Activated CD8-positive, alpha-beta T cell treated with anti-CD3 and anti-CD28 coated beads, Interleukin-2, amount 10 ng/mL, durations not matched to agents 7 days and 5 days (primary cell): ENCODE measurements at regions of chr1 and their contacts with region 1.

Region 1: DNA sequence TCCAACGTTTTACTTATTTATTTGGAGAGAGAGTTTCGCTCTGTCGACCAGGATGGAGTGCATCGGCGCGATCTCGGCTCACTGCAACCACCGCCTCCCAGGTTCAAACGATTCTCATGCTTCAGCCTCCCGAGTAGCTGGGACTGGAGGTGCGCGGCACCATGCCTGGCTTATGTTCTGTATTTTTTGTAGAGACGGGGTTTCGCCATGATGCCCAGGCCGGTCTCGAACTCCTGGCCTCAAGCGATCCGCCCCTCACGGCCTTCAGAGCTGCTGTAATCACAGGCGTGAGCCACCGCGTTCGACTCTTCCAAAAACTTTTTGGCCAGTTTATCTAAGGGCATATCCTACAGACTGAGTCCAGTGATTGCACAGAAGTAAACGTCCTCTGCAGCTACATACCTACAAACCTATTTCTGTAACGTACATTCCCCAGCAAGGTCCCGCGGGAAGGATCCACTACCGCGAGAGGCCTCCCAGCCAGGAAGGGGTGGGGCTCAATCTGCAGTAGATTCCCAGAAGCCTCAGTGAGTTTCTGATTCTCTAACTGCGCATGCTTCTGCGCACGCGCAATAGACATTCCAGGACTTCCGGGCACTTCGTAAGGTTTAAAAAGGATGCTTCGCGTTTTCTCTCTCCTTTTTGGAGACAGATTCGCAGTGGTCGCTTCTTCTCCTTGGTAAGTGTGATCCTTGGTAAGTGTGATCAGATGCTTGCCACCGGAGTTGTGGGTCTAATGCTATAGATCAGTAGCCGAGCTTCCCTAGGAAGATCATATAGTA is at the start of gene RCC1:
- DNase-seq: peak; percentile 98
- ATAC-seq: peak; percentile 88
- H3K4me3 Mint-ChIP-seq: peak within 1 kb of the TSS; percentile 97
- H3K27ac Mint-ChIP-seq: peak within 1 kb of the TSS; percentile 97
- H3K4me1 Mint-ChIP-seq: peaks cover 28% of the 10 kb centered on the region
- H3K27me3 Mint-ChIP-seq: no peaks in the 10 kb centered on the region
- total RNA-seq, gene RCC1: 80.7 to 85.3 TPM

Region 2: DNA sequence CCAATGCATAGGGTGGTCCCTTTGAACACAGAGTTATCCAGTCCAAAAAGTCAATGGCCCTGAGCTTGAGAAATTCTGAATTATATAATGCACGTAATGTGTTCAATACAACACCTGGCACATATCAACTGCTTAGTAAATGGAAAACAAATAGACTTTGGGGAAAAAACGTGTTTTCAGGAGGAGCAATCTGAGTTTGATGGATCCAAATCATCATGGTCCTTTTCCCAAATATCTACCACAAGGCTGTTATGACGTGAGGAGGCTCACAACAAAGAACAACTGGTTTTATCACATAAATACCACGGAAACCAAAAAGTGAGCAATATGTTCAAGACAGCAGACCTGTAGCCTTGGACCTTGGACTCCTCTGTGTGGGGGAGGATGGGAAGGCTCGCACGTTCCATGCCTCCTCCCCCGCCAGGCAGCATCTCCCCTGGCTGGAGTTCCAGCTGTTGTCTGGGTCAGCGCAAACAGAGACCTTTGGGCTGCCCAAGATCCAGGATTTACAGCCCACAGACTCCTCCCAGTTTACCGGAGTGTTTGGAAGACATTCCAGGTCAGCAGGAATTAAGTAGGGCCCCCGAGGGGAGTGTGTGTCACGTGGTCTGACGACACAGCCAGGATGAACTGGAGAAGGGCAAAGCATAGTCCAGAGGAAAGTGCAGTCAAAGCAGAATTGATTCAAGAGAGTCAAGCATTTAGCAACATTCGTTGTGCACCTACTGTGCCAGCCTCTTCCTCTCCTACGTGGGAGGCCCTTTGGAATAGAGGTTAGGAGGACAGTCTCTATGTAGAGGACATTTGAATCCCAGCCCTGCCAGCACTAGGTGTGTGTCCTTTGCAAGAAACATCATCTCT is 209.0 kb before region 1 on chr1:
- CTCF ChIA-PET with region 1: no interaction called
- POLR2A ChIA-PET with region 1: no interaction called
- DNase-seq: no peak
- ATAC-seq: no peak
- H3K4me3 Mint-ChIP-seq: no peak overlapping the region
- H3K27ac Mint-ChIP-seq: no peak overlapping the region
- H3K4me1 Mint-ChIP-seq: peaks cover 24% of the 10 kb centered on the region
- H3K27me3 Mint-ChIP-seq: peaks cover 13% of the 10 kb centered on the region

Region 3: GRCh38 chr1:28443550-28443949 is 62.0 kb before region 1 on chr1:
- CTCF ChIA-PET with region 1: no interaction called
- POLR2A ChIA-PET with region 1: no interaction called
- DNase-seq: no peak
- ATAC-seq: no peak
- H3K4me3 Mint-ChIP-seq: no peak overlapping the region
- H3K27ac Mint-ChIP-seq: no peak overlapping the region
- H3K4me1 Mint-ChIP-seq: peaks cover 19% of the 10 kb centered on the region
- H3K27me3 Mint-ChIP-seq: no peaks in the 10 kb centered on the region

Region 4: DNA sequence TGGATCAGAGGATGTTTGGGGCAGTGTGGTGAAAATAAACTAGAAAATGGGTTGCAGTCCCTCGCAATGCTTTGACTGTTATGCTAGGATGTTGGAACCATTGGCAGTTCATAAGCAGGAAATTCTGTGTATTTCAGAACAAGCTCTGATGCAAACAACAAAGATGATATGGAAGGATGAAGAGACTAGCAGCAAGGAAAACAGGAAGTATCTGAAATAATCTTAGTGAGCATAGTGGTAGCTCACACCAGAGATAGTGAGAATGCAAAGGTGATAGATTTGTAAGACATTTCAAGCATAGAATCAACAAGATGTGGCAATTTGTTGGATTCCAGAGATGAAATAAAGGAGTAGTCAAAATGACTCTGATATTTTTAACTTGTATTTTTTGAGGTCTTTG is 10.9 kb before region 1 on chr1:
- CTCF ChIA-PET with region 1: no interaction called
- POLR2A ChIA-PET with region 1: interaction called, 10 read pairs
- DNase-seq: no peak
- ATAC-seq: no peak
- H3K4me3 Mint-ChIP-seq: no peak overlapping the region
- H3K27ac Mint-ChIP-seq: peak overlapping the region; percentile 69
- H3K4me1 Mint-ChIP-seq: peaks cover 6% of the 10 kb centered on the region
- H3K27me3 Mint-ChIP-seq: no peaks in the 10 kb centered on the region

Region 5: DNA sequence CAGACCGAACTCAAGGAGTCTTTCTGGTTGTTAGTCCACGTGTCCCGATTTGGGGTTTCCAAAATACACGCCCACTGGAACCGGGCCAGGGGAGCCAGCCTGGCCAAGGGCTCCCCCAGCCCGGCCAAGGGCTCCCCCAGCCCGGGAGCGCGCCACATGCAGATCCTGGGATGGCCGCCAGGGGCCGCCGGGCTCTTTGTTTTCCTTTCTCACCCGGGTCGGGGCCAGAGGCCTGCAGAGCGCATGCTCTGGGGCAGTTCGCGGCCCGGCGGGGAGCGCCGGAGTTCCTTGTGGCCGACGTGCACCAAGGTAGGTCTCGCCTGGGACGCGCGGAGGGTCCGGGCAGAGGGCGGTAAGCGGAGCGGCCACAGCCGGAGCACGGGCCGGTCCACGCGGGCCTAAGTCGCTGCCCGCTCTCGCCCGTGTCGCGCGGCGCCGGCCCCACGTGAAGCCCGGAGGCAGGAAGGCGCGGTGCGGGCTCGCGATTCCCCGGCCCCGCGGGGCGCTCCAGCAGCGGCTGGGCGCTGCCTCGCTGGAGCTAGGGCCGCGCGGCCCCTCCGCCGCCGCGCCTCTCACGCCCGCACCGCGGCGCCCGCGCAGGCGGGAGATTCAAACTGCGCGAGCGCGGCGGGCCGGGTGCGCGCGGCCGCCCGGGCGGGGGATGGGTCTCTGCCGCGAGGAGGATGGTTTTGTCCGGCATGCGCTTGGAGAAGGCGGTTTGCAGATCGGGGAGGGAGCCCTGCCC is 12.6 kb after region 1 on chr1:
- CTCF ChIA-PET with region 1: interaction called, 27 read pairs
- POLR2A ChIA-PET with region 1: interaction called, 7 read pairs
- DNase-seq: peak; percentile 91
- ATAC-seq: peak; percentile 77
- H3K4me3 Mint-ChIP-seq: peak overlapping the region; percentile 92
- H3K27ac Mint-ChIP-seq: peak overlapping the region; percentile 94
- H3K4me1 Mint-ChIP-seq: peaks cover 41% of the 10 kb centered on the region
- H3K27me3 Mint-ChIP-seq: no peaks in the 10 kb centered on the region

Region 6: DNA sequence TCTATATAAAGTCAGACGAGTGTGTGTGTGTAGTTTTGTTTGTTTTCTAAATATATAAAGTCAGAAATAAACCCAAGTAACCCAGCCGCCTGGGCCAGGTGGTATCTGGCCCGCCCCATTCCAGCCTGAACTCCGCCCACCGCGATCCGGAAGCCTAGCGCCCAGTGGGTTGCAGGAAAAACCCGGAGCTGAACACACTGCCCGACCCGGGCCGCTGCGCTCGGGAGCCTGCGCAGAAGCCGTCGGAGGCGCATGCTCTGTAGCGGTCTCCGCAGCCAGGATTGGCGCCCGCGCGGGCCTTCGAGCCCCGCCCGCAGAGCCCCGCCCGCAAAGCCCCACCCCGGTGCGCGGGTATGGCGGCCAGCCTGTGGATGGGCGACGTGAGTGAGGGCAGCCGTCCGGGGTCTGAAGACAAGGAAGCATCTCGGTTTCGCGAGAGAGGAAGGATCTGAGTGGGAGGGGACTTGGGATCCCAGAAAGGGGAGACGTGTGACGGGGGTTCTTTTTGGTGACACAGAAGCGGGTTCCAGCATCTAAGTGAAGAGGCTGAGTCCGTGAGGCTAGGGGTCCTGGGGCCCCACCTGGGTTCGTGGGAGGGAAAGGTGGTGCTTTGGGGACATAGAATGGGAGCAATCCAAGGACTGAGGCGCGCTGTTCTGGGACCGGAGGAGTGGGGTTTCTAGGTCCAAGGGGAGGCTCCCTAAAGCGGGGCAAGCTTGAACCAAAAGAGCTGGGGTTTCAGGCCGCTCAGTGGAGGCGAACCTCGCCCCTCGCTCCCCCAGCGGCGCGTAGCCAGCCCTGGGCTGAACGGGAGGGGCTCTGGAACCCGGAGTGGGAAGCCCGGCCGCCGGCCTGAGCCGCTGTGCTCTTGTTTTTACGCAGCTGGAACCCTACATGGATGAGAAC is 47.4 kb after region 1 on chr1 and contains the start of gene TRNAU1AP:
- CTCF ChIA-PET with region 1: interaction called, 4 read pairs
- POLR2A ChIA-PET with region 1: interaction called, 12 read pairs
- DNase-seq: peak; percentile 98
- ATAC-seq: peak; percentile 95
- H3K4me3 Mint-ChIP-seq: peak within 1 kb of the TSS; percentile 98
- H3K27ac Mint-ChIP-seq: peak within 1 kb of the TSS; percentile 97
- H3K4me1 Mint-ChIP-seq: peaks cover 14% of the 10 kb centered on the region
- H3K27me3 Mint-ChIP-seq: no peaks in the 10 kb centered on the region
- total RNA-seq, gene TRNAU1AP: 73.2 to 77.7 TPM

Region 7: DNA sequence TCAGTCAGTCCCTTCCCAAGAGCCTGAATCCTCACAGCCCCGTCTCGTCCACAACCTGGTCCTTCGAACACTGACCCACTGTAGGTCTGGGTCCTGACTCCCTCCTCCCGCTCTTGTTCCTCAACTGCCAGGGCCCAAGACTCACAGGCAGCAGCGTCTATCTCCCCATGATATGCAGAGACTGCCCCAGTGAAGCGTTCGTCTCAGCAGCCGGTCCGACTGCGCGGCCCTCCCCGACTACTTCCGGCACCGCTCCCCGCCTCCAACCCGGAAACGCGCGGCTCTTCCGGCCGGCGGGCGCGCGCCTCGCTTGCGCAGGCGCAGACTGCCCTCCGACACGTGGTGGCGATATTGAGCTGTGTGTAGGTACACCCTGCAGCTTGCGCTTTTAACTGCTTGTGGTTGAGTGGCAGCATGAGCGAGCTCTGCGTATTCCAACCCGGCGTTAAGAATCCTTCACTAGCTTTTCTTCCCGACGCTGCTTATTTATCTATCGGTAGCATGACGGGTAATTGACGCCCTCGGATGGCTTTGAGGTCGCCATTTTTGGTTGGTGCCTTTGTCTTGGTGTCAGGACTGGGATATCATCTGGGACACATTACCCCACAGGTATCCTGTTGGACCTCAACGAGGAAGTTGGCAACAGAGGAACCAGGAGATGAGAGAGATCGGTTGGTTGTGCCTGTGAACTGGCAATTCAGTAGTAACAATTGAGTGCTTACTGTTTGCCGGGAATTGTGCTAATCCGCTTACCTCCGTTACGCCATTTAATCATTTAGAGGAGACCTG is 137.4 kb after region 1 on chr1 and contains the start of gene TAF12:
- CTCF ChIA-PET with region 1: interaction called, 4 read pairs
- POLR2A ChIA-PET with region 1: interaction called, 13 read pairs
- DNase-seq: peak; percentile 94
- ATAC-seq: peak; percentile 90
- H3K4me3 Mint-ChIP-seq: peak within 1 kb of the TSS; percentile 99
- H3K27ac Mint-ChIP-seq: peak within 1 kb of the TSS; percentile 99
- H3K4me1 Mint-ChIP-seq: peaks cover 51% of the 10 kb centered on the region
- H3K27me3 Mint-ChIP-seq: no peaks in the 10 kb centered on the region
- total RNA-seq, gene TAF12: 35.7 to 39.3 TPM

Region 8: DNA sequence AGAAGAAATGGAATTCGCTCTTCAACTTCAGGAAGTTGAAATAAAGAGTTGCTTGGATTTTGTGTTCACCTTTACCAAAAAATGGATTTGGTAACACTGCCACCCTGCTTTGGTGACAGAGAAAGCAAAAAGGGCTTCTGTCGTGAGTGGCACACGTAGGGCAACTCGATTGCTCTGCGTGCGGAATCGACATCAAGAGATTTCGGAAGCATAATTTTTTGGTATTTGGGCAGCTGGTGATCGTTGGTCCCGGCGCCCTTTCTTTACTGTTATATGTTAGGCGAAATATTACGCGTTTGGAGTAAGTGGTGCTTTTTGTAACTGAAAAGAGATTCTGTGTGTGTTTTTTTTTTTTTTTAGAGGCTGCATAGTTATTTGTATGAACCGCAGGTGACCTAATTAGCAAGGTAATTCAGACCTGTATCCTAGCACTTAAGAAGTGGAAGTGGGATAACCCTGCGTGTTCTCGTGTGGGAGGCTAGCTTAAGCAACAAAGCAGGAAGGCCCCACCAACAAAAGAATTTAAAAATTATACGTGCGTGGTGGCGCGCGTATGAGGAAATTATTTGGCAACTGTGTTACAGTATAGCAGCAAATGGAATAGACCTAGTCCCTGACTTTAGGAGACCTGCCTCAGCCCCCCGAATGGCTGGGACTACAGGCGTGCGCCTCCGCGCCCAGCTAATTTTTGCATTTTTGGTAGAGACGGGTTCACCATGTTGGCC is 143.0 kb after region 1 on chr1 and contains the start of gene RNU11:
- CTCF ChIA-PET with region 1: no interaction called
- POLR2A ChIA-PET with region 1: interaction called, 13 read pairs
- DNase-seq: peak; percentile 93
- ATAC-seq: peak; percentile 80
- H3K4me3 Mint-ChIP-seq: peak within 1 kb of the TSS; percentile 84
- H3K27ac Mint-ChIP-seq: peak within 1 kb of the TSS; percentile 99
- H3K4me1 Mint-ChIP-seq: peaks cover 32% of the 10 kb centered on the region
- H3K27me3 Mint-ChIP-seq: no peaks in the 10 kb centered on the region
- total RNA-seq, gene RNU11: not detected